ENCODE measurements at regions of chr1 and their contacts with region 1.

Region 1: DNA sequence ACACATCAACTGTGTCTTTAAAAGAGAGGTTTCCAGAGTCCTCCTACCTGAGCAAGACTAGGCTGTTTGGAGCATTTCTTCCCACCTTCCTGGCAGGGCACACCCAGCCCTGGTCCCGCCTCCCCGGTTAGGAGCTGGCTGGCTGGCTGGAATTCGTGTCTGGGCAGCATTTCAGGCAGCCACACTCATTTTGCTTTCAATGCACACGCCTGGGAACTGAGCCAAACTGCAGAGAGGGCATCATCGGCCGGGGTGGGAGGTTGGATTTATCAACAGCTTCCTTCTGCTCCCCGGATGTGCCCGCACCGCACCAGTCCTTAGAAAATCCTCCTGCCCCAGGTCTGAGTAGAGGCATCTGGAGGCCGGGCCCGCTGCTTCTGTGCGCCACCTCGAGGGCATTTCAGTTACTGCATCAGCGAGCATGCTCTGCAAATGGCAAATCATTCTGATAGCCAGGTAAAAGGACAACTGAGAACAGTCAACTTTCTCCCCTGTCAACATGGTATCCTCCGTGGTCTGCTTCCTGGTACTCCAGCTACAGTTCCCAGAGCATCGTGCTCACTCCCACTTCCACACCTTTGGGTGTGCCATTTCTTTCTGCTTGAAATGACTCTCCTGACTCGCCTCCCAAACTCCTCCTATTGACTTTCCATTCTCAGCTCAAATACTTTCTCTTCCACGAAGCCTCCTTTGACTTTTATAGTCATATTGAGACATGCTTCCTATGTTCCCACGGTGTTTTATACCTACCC is 20.6 kb downstream of the TCEA3 start:
- DNase-seq: peak; percentile 70 to 79 (median 78)
- H3K4me3 ChIP-seq: peak overlapping the region in 2 of 7 experiments; percentile 16 to 57
- H3K27ac ChIP-seq: no peak overlapping the region
- H3K4me1 ChIP-seq: peaks cover 0 to 18% (median 5%) of the 10 kb centered on the region in 4 experiments
- H3K27me3 ChIP-seq: no peaks in the 10 kb centered on the region

Region 2: DNA sequence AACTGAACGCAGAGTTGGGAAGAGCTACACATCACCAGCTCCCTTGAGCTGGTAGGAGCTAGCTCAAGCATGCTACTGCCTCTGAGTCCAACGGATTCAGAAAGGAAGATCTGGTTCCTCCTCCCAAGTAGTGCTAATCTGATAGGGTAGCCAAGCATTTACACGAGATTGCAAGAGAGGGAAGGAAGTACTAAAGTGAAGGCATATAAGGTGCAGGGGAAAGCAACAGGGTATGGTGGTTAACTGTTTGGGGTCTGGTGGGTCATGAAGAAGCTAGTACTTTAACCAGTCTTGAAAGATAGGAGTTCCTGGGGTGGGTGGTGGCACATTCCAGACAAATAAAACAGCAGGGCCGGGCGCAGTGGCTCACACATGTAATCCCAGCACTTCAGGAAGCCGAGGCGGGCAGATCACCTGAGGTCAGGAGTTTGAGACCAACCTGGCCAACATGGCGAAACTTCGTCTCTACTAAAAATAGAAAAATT is 14.0 kb before region 1 on chr1:
- CTCF ChIA-PET with region 1: interaction called, 18 read pairs
- POLR2A ChIA-PET with region 1: no interaction called
- DNase-seq: peak in 2 of 3 donors; percentile 47 to 58
- H3K4me3 ChIP-seq: no peak overlapping the region
- H3K27ac ChIP-seq: no peak overlapping the region
- H3K4me1 ChIP-seq: peaks cover 0 to 7% (median 5%) of the 10 kb centered on the region in 4 experiments
- H3K27me3 ChIP-seq: no peaks in the 10 kb centered on the region

Measured in common myeloid progenitor, CD34-positive (primary cell).